MCF 10A (cell line): ENCODE measurements at regions of chr2 and their contacts with region 1.

Region 1: GRCh38 chr2:203683932-203684556 is 22.4 kb upstream of the CD28 start:
- DNase-seq: peak; percentile 96
- H3K4me3 Mint-ChIP-seq: peak overlapping the region; percentile 30
- H3K27ac Mint-ChIP-seq: peak overlapping the region; percentile 92
- H3K4me1 Mint-ChIP-seq: peaks cover 66% of the 10 kb centered on the region
- H3K27me3 Mint-ChIP-seq: no peaks in the 10 kb centered on the region
- CTCF ChIP-seq: no peak

Region 2: GRCh38 chr2:203164311-203164935 is 519.6 kb before region 1 on chr2:
- CTCF ChIA-PET with region 1: no interaction called
- POLR2A ChIA-PET with region 1: no interaction called
- intact Hi-C with region 1: no loop called
- DNase-seq: no peak
- H3K4me3 Mint-ChIP-seq: no peak overlapping the region
- H3K27ac Mint-ChIP-seq: no peak overlapping the region
- H3K4me1 Mint-ChIP-seq: no peaks in the 10 kb centered on the region
- H3K27me3 Mint-ChIP-seq: no peaks in the 10 kb centered on the region
- CTCF ChIP-seq: no peak

Region 3: DNA sequence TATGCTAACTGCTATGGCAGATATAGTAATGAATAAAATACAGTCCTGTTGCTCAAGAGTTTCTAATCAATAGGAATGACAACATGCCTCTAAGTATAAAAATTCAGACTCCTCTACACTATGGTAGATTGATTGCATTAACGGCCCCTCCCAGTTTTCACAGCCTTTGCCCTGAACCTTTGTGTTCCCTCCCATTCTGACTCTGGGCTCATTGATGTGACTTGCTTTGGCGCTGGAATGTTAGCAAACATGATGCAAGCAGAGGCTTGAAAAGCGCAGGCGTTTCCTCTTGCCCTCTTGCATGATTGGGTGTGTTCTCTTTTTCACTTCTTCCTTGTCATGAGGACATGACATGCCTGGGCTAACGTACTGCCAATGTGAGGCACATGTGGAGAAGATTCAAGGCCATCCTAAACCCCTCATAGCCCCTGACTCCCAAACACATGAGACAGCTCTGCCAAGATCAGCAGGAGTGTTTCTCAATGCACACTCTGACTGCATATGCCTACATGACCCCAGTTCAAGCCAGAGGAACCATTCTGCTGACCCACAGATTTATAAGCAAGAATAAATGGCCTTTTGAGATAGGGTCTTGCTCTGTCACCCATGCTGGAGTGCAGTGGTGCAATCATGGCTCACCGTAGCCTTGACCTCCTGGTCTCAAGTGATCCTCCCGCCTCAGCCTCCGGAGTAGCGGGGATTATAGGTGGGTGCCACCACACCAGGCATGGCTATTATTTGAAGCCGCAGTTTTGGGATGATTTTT is 27.3 kb before region 1 on chr2:
- CTCF ChIA-PET with region 1: no interaction called
- POLR2A ChIA-PET with region 1: interaction called, 12 read pairs
- intact Hi-C with region 1: no loop called
- DNase-seq: peak; percentile 91
- H3K4me3 Mint-ChIP-seq: no peak overlapping the region
- H3K27ac Mint-ChIP-seq: peak overlapping the region; percentile 79
- H3K4me1 Mint-ChIP-seq: peaks cover 21% of the 10 kb centered on the region
- H3K27me3 Mint-ChIP-seq: no peaks in the 10 kb centered on the region
- CTCF ChIP-seq: no peak

Region 4: DNA sequence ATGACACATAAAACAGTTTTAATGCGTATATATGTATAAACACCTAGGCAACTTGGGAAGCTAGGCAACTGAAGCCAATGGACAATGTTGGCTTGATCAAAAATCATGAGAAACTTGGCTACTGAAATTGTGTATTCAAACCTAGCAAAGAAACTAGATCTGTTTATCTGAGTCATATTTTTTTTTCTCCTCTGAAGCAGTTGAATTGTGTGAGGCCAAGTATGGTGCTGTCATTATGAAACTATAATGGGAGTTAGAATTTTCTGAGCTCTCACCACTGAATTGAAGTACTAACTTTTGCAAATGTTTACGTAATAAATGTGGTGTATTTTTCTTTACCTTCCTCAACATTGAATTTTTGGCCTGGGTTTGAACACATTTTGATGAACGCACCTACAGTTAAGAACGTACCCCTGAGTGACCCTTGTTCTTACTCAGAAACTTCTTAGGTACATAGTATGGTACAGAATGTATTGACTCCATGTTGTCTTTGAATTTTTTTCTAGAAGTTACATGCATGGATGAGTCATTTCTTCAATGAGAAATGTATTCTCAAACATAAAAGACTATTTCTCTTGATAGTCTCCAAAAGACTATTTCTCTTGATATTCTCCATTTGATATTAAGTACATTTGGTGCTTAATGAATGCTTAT is 46.2 kb after region 1 on chr2:
- CTCF ChIA-PET with region 1: interaction called, 3 read pairs
- POLR2A ChIA-PET with region 1: interaction called, 9 read pairs
- intact Hi-C with region 1: loop called (anchors 2 kb)
- DNase-seq: peak; percentile 43
- H3K4me3 Mint-ChIP-seq: peak overlapping the region; percentile 13
- H3K27ac Mint-ChIP-seq: peak overlapping the region; percentile 92
- H3K4me1 Mint-ChIP-seq: peaks cover 26% of the 10 kb centered on the region
- H3K27me3 Mint-ChIP-seq: no peaks in the 10 kb centered on the region
- CTCF ChIP-seq: no peak

Region 5: DNA sequence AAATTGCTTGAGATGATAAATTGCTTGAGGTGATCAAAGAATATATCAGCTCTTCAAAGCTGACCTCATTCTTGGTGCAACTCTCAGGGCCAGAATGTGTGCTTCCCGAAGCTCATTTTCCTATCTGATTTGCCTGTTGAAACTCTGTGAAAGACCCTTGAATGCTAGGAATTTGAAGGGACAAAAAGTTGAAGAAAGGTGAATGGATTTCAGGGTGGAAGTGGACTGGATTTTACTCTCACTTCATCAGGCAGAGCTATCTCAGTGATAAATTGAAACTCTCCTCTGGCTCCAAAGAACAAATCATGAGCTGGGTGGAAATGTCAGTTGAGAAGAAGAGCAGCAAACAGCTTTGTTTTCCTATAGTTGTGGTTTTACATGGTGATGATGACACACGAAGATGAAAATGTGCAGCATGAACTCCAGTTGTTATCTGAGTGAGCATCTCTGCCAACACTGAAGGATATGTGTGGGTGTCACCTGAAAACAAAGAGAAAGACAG is 56.8 kb after region 1 on chr2:
- CTCF ChIA-PET with region 1: interaction called, 4 read pairs
- POLR2A ChIA-PET with region 1: interaction called, 5 read pairs
- intact Hi-C with region 1: loop called (anchors 5 kb)
- DNase-seq: peak; percentile 30
- H3K4me3 Mint-ChIP-seq: no peak overlapping the region
- H3K27ac Mint-ChIP-seq: peak overlapping the region; percentile 36
- H3K4me1 Mint-ChIP-seq: peaks cover 40% of the 10 kb centered on the region
- H3K27me3 Mint-ChIP-seq: no peaks in the 10 kb centered on the region
- CTCF ChIP-seq: no peak

Region 6: GRCh38 chr2:203897544-203897943 is 213.5 kb after region 1 on chr2:
- CTCF ChIA-PET with region 1: no interaction called
- POLR2A ChIA-PET with region 1: no interaction called
- intact Hi-C with region 1: no loop called
- DNase-seq: no peak
- H3K4me3 Mint-ChIP-seq: no peak overlapping the region
- H3K27ac Mint-ChIP-seq: no peak overlapping the region
- H3K4me1 Mint-ChIP-seq: no peaks in the 10 kb centered on the region
- H3K27me3 Mint-ChIP-seq: no peaks in the 10 kb centered on the region
- CTCF ChIP-seq: no peak